ENCODE measurements at regions of chr10 and their contacts with region 1.

Region 1: DNA sequence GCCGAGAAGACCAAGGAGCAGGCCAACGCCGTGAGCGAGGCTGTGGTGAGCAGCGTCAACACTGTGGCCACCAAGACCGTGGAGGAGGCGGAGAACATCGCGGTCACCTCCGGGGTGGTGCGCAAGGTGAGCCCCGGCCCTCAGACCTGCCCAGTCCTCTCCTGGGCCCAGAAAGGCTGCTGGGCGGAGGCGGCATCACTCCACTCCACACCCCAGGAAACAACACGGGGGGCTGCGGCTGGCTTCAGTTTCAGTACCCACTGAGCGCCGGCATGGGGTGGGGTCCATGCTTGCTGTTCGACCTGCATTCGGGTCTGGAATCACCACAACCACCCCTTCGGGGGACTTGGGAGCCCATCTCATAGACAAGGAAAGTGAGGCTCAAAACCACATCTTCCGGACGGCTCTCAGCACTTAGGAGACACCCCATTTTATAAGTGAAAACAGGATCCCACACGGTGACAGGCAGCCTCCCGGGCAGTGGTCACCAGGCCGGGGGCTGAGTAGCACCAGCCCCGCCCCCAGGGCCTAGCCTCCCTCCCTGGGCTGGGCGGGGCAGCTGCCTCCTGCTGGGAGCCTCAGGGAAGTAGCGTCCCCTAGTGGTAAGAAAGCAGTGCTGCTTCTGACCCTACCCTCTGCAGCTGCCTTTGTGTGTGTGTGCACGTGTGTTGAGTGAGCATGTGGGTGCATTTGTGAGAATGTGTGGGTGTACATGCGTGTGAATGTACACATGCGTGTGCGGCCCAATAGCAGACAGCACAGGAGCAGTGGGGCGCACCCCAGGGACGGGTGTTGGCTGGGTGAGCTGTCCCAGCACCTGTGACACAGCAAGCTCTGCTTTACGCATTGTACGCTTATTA is 1.8 kb downstream of the SNCG start:
- DNase-seq: peak in 3 of 6 donors; percentile 56 to 70 (median 63)
- ATAC-seq: peak; percentile 75 to 90 (median 80)
- H3K4me3 ChIP-seq: no peak overlapping the region
- H3K27ac ChIP-seq: no peak overlapping the region
- H3K4me1 ChIP-seq: no peaks in the 10 kb centered on the region
- H3K27me3 ChIP-seq: no peaks in the 10 kb centered on the region
- CTCF ChIP-seq: peak; percentile 79 to 83 (median 81)

Region 2: DNA sequence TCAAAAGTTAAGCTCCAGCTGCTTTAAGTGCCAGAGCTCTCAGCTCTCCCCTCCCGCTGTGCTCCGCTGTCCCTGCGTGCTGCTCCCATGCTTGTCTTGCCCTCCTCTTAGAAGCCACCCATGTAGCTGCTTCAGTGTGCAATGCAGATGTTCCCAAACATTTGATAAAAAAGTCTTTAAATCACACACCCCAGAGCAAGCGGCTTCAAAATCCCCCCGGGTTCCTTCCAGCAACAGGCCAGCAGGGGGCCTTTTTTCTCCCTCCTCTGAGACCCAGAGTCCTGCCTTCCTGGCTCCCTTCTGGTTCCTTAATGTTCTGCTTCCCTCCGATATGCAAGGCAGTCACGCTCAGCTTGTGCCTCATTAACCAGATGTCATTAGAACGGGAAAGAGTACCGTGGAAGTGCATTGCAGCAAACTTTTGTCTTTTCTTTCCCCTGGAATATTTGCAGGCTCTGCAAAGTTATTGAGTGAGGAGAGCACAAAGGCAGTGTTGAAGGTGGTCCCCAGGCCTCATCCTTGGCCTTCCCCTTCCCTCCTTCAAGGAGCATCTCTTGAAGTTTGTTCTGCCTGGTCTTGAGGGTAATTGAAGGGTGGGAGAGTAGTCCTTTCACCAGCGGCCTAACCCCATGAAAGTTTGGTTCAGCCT is 266.4 kb before region 1 on chr10:
- intact Hi-C with region 1: loop called in 1 of 3 experiments (anchors 5 kb)
- DNase-seq: peak in 1 of 6 donors; percentile 45
- ATAC-seq: peak; percentile 36 to 75 (median 73)
- H3K4me3 ChIP-seq: no peak overlapping the region
- H3K27ac ChIP-seq: no peak overlapping the region
- H3K4me1 ChIP-seq: no peaks in the 10 kb centered on the region
- H3K27me3 ChIP-seq: no peaks in the 10 kb centered on the region
- CTCF ChIP-seq: peak in 3 of 4 donors; percentile 41 to 47 (median 44)

Region 3: GRCh38 chr10:86755740-86756510 is 204.3 kb before region 1 on chr10:
- intact Hi-C with region 1: no loop called
- DNase-seq: peak; percentile 82 to 90 (median 88)
- ATAC-seq: peak; percentile 83 to 94 (median 92)
- H3K4me3 ChIP-seq: peak overlapping the region; percentile 69 to 87 (median 78)
- H3K27ac ChIP-seq: peak overlapping the region; percentile 87 to 97 (median 97)
- H3K4me1 ChIP-seq: peaks cover 0 to 15% (median 5%) of the 10 kb centered on the region in 3 donors
- H3K27me3 ChIP-seq: no peaks in the 10 kb centered on the region
- CTCF ChIP-seq: no peak